Activated CD4-positive, alpha-beta T cell treated with anti-CD3 and anti-CD28 coated beads, Interleukin-2, amount 10 ng/mL, durations not matched to agents 24 days and 14 days (primary cell): ENCODE measurements at regions of chr22 and their contacts with region 1.

Region 1: GRCh38 chr22:24420977-24421931 is 6.1 kb upstream of the ADORA2A start:
- DNase-seq: peak; percentile 76
- H3K4me3 Mint-ChIP-seq: no peak overlapping the region
- H3K27ac Mint-ChIP-seq: no peak overlapping the region
- H3K4me1 Mint-ChIP-seq: peaks cover 15% of the 10 kb centered on the region
- H3K27me3 Mint-ChIP-seq: peaks cover 4% of the 10 kb centered on the region

Region 2: DNA sequence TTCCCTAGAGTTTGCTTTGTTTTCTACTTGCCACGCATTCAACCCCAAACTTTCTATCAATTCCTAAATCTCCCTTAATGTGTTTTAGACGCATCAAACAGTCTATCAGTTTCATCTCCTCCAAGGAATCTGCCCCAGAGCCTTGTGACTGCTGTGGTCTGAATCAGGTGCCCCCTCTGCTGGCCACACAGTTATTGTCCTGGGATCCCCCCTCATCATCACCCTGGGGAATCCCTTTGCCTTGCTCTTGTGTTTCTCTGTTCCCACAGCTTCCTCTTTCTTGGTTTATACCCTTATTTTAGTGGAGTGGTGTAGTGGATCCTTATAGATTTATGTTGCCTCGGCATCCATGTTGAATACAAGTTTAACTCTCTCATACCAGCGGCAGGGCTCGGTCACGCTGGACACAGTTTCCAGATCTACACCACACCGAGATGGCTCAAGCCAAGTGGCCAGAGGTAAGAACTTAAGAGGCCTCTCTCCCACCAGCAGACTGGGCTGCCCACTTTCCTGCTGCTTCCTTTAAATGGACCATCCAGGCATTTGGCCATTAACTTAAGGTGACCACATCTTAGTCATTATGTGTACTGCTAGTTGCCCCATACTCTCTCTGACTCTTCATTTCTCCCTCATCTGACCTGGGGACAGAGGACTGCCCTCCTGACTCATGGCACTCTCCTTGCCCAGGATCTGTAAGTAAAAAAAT is 82.0 kb after region 1 on chr22:
- intact Hi-C with region 1: loop called (anchors 2 kb)
- DNase-seq: peak; percentile 85
- H3K4me3 Mint-ChIP-seq: no peak overlapping the region
- H3K27ac Mint-ChIP-seq: peak overlapping the region; percentile 14
- H3K4me1 Mint-ChIP-seq: peaks cover 23% of the 10 kb centered on the region
- H3K27me3 Mint-ChIP-seq: peaks cover 3% of the 10 kb centered on the region

Region 3: DNA sequence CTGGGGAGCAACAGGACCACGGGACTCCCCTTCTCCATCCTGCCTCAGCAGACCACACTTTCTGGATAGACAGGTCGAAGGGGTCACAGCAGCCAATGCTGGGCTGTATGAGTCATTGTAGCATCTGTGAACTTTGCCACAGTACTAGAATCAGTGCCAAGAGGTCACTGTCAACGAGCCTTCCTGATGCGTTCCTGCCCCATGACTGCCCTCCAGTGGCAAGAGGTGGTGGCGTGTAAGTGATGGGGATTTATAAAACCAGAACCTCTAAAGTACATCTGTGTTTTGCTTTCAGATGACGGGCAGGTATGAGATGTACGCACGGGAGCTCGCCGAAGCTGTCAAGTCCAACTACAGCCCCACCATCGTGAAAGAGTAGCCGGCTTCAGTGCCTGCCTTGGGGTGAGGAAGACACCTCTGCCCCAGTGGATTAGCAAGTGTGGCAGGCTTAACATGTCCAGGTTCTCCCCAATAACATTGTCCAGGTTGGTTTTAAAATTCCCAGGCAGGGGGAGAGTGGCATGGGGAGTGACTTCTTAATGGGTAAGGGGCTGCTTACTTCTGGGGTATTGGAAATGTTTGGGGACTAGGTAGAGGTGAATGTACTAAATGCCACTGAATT is 104.3 kb after region 1 on chr22:
- intact Hi-C with region 1: loop called (anchors 1 kb)
- DNase-seq: peak; percentile 95
- H3K4me3 Mint-ChIP-seq: no peak overlapping the region
- H3K27ac Mint-ChIP-seq: no peak overlapping the region
- H3K4me1 Mint-ChIP-seq: peaks cover 15% of the 10 kb centered on the region
- H3K27me3 Mint-ChIP-seq: peaks cover 5% of the 10 kb centered on the region

Region 4: DNA sequence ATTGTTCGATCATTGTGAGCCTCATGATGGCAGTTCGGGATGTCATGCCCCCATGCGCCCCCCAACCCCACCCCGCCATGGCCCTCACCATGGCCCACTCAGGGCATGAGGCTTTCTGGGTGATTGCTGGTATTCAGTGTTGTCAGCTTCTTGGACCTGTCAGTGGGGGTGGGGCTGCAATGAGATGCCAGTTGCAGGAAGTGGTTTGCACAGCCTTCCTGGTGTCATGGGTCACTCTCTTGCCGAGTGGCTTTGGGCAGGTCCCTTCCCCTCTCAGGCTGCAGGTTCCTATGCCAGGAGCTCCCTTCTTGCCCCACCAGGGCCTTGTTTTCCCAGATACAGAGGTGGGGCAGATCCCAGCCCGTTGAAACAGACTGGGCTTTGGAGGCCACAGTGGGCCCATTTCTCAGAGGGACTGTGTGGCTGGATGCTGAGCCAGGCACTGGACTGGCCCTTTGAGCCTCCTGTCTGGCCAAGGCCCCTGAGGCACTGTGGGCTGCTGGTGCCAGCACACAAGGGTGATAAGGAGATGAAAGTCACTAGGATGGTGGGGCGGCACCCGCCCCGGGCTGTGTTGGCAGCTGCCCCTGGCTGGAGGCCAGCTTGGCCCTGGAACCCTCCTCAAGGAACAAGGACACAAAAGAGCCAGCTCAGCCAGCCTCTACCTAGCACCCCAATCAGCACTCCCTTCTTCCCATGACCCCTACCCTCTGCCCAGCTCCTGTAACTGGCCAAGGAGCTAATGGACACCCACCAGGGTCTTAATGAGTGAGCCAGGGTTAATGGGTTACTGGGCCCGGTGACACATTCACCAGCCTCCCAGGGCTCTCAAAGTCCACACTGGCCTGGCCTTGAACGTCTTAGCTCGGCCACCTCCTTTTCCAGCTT is 180.2 kb after region 1 on chr22:
- intact Hi-C with region 1: no loop called
- DNase-seq: peak; percentile 70
- H3K4me3 Mint-ChIP-seq: no peak overlapping the region
- H3K27ac Mint-ChIP-seq: no peak overlapping the region
- H3K4me1 Mint-ChIP-seq: peaks cover 37% of the 10 kb centered on the region
- H3K27me3 Mint-ChIP-seq: no peaks in the 10 kb centered on the region